ENCODE measurements at regions of chr4 and their contacts with region 1.

Region 1: DNA sequence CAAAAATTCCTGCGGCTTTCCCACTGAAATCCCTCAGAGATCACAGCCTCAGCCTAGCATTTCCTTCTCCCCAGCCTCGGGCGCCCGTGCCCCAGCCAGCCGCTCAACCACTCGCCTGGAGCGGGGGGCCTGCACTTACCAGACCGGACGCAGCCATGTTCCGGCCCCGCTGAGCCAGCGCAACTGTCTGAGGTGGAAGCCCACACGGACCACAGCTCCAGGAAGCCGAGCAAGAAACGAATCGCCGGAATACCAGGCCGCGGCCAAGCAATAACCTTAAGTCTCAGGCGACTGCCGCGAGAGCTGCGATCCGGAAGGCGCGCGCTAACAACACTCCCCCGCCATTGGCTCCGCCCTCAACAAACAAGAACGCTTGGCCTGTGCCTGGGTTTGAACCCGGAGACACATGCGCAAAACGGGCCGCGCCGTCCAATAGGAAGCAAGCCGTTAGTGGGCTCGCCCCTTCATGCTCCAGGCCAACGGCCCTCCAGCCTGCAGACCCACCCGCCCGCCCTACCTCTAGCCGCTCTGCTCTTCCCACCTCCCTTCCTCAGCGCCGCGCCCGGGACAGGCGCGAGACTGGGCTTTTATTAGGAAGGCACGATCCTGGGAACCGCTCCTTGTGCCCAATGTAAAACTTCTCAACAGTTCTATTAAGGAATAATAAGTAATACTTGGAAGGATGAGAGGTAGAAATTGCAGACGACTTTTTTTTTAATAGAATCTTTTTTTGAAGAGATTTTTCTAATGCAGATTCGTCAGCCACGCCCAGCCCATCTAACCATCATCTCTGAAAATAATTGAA is at the start of gene CENPC:
- DNase-seq: peak; percentile 97
- ATAC-seq: peak; percentile 99 to 100 (median 100)
- H3K4me3 ChIP-seq: peak within 1 kb of the TSS; percentile 93
- H3K27ac ChIP-seq: peak within 1 kb of the TSS; percentile 92
- H3K4me1 ChIP-seq: peaks cover 16% of the 10 kb centered on the region
- H3K27me3 ChIP-seq: no peaks in the 10 kb centered on the region
- CTCF ChIP-seq: no peak
- total RNA-seq, gene CENPC: 3.5 to 5.6 (median 4.5) TPM

Region 2: GRCh38 chr4:67700738-67701516 is 155.5 kb after region 1 on chr4 and contains the start of gene UBA6:
- intact Hi-C with region 1: loop called (anchors 5 to 10 kb)
- DNase-seq: peak; percentile 96 to 98
- ATAC-seq: peak; percentile 100
- H3K4me3 ChIP-seq: peak within 1 kb of the TSS; percentile 96
- H3K27ac ChIP-seq: peak within 1 kb of the TSS; percentile 86
- H3K4me1 ChIP-seq: peaks cover 13% of the 10 kb centered on the region
- H3K27me3 ChIP-seq: no peaks in the 10 kb centered on the region
- CTCF ChIP-seq: peak; percentile 36
- total RNA-seq, gene UBA6: 12.0 to 37.9 (median 23.8) TPM

Measured in psoas muscle (tissue), 8 donors.